ENCODE measurements at regions of chr14 and their contacts with region 1.

Region 1: GRCh38 chr14:23301288-23301968 is 1.2 kb downstream of the PPP1R3E start:
- DNase-seq: peak; percentile 98 to 99 (median 99)
- H3K4me3 ChIP-seq: peak overlapping the region; percentile 83 to 95 (median 91)
- H3K27ac ChIP-seq: peak overlapping the region; percentile 64 to 90
- H3K4me1 ChIP-seq: peaks cover 16 to 49% (median 37%) of the 10 kb centered on the region in 4 experiments
- H3K27me3 ChIP-seq: no peaks in the 10 kb centered on the region

Region 2: GRCh38 chr14:23258256-23258655 is 43.2 kb before region 1 on chr14:
- CTCF ChIA-PET with region 1: interaction called, 11 read pairs
- POLR2A ChIA-PET with region 1: no interaction called
- DNase-seq: no peak
- H3K4me3 ChIP-seq: no peak overlapping the region
- H3K27ac ChIP-seq: no peak overlapping the region
- H3K4me1 ChIP-seq: no peaks in the 10 kb centered on the region
- H3K27me3 ChIP-seq: no peaks in the 10 kb centered on the region

Region 3: GRCh38 chr14:23269193-23269592 is 32.2 kb before region 1 on chr14:
- CTCF ChIA-PET with region 1: interaction called, 118 read pairs
- POLR2A ChIA-PET with region 1: interaction called, 4 read pairs
- DNase-seq: no peak
- H3K4me3 ChIP-seq: no peak overlapping the region
- H3K27ac ChIP-seq: no peak overlapping the region
- H3K4me1 ChIP-seq: no peaks in the 10 kb centered on the region
- H3K27me3 ChIP-seq: peaks cover 0 to 3% (median 0%) of the 10 kb centered on the region in 5 experiments

Region 4: DNA sequence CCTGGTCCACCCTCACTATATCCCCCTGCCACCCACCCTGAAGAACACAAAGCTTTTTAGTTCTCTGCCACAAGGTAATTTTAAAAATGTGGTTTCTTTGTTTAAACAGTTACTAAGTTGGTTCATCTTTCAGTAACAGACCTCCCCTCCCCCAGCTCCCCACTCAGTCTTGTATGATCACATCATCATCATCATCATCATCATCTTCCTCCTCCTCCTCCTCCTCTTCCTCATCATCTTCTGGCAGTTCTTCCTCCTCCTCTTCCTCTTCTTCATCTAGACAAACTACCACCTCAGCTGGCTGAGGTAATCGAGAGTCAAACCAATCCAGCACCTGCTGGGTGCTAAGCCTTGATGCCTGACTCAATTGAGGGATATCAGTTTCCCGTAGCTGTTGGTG is 26.0 kb before region 1 on chr14:
- CTCF ChIA-PET with region 1: interaction called, 118 read pairs
- POLR2A ChIA-PET with region 1: no interaction called
- DNase-seq: no peak
- H3K4me3 ChIP-seq: no peak overlapping the region
- H3K27ac ChIP-seq: no peak overlapping the region
- H3K4me1 ChIP-seq: peaks cover 0 to 4% (median 0%) of the 10 kb centered on the region in 4 experiments
- H3K27me3 ChIP-seq: no peaks in the 10 kb centered on the region

Region 5: GRCh38 chr14:23286020-23286905 is 15.2 kb before region 1 on chr14 and contains the start of gene HOMEZ:
- CTCF ChIA-PET with region 1: interaction called, 22 read pairs
- POLR2A ChIA-PET with region 1: interaction called, 6 read pairs
- DNase-seq: peak; percentile 97 to 98 (median 98)
- H3K4me3 ChIP-seq: peak within 1 kb of the TSS; percentile 59 to 96 (median 95)
- H3K27ac ChIP-seq: peak within 1 kb of the TSS; percentile 76 to 91
- H3K4me1 ChIP-seq: peaks cover 11 to 22% (median 15%) of the 10 kb centered on the region in 4 experiments
- H3K27me3 ChIP-seq: no peaks in the 10 kb centered on the region

Region 6: GRCh38 chr14:23320774-23321571 is 19.5 kb after region 1 on chr14 and contains the start of gene PABPN1:
- CTCF ChIA-PET with region 1: interaction called, 177 read pairs
- POLR2A ChIA-PET with region 1: interaction called, 38 read pairs
- DNase-seq: peak; percentile 100
- H3K4me3 ChIP-seq: peak within 1 kb of the TSS; percentile 66 to 93 (median 83)
- H3K27ac ChIP-seq: peak within 1 kb of the TSS; percentile 89 to 92
- H3K4me1 ChIP-seq: peaks cover 8 to 25% (median 22%) of the 10 kb centered on the region in 4 experiments
- H3K27me3 ChIP-seq: no peaks in the 10 kb centered on the region

Measured in common myeloid progenitor, CD34-positive (primary cell).